Mammary epithelial cell (primary cell): ENCODE measurements at regions of chr18 and their contacts with region 1.

Region 1: DNA sequence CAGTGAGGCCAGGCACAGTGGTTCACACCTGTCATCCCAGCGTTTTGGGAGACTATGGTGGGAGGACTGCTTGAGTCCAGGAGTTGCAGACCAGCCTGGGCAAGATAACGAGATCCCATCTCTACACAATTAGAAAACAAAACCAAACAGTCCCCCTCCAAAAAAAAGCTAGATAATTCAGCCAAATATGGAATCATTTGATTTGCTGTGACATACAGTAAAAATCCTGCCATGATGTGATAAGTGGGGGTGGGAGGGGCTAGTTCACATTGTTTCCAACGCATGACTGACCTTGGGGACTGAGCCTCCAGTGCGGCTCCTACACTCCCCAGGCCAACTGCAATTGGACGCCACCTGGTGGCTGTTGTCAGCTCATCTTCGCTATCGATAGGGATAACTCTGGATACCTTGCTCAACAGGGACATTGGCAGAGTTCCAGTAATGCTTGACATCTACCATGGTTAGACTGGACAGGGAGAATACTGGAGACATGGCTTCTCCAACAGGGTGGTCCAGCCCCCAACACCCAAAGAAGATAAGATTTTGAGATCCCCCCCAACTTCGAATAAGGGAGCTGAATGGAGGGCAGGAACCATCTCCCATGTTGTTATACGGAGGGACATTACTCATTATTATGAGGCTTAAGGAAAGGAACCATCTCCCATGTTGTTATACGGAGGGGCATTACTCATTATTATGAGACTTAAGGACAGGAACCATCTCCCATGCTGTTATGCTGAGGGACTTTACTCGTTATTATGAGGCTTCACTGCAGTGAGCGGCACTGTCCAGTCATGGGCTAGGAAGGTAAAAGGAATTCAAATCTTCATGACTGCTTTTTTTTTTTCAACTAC is 135.9 kb downstream of the TGIF1 start:
- DNase-seq: peak; percentile 61
- H3K4me3 ChIP-seq: no peak overlapping the region
- H3K27ac ChIP-seq: no peak overlapping the region
- H3K4me1 ChIP-seq: peaks cover 9% of the 10 kb centered on the region
- H3K27me3 ChIP-seq: no peaks in the 10 kb centered on the region
- CTCF ChIP-seq: peak; percentile 86 to 90

Region 2: DNA sequence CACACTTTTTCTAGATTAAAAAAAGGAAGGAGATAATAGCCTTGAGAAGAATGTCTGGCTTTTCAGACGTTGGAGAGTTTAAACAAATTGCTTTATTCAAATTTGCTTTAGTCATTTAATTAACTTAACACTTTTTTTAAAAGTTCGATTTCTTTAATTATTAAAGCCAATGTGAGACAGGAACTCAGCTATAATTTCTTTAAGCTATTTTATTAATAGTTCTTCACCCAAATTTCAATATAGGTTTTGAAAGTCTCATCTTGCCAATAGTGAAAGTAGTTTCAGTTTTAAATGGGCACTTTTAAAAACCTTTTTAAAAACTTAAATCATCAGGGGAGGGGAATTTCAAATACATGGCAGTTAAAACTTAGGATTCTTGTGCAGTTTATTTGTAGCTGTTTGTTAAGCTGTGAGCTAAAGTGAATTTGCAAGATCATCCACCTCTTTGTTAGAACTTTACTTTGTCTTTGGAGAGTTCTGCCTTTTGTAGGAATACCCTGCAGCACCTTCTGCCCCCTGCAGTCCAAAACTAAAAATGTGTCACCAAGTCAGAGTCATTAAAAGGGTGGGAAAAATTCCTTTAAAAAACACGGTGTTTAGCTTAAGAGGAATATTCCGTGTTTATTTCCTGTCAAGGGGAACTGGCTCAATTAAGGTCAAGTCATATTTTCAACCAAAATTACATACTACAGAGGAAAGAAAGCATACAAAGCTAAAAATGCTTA is 131.4 kb before region 1 on chr18:
- CTCF ChIA-PET with region 1: interaction called, 7 read pairs
- dilution Hi-C with region 1: no loop called
- in situ Hi-C with region 1: loop called in 1 of 2 experiments (anchors 5 kb)
- intact Hi-C with region 1: loop called (anchors 1 kb)
- DNase-seq: peak; percentile 46
- H3K4me3 ChIP-seq: peak overlapping the region; percentile 48 to 91 (median 75)
- H3K27ac ChIP-seq: peak overlapping the region; percentile 97
- H3K4me1 ChIP-seq: peaks cover 41% of the 10 kb centered on the region
- H3K27me3 ChIP-seq: no peaks in the 10 kb centered on the region
- CTCF ChIP-seq: peak; percentile 60 to 63

Region 3: GRCh38 chr18:3481696-3482210 is 104.1 kb before region 1 on chr18:
- CTCF ChIA-PET with region 1: no interaction called
- dilution Hi-C with region 1: loop called (anchors 5 kb)
- in situ Hi-C with region 1: no loop called
- intact Hi-C with region 1: no loop called
- DNase-seq: no peak
- H3K4me3 ChIP-seq: no peak overlapping the region
- H3K27ac ChIP-seq: no peak overlapping the region
- H3K4me1 ChIP-seq: peaks cover 8% of the 10 kb centered on the region
- H3K27me3 ChIP-seq: no peaks in the 10 kb centered on the region
- CTCF ChIP-seq: peak; percentile 43

Region 4: GRCh38 chr18:3758531-3758930 is 172.6 kb after region 1 on chr18:
- CTCF ChIA-PET with region 1: no interaction called
- dilution Hi-C with region 1: no loop called
- in situ Hi-C with region 1: no loop called
- intact Hi-C with region 1: no loop called
- DNase-seq: peak; percentile 50
- H3K4me3 ChIP-seq: no peak overlapping the region
- H3K27ac ChIP-seq: no peak overlapping the region
- H3K4me1 ChIP-seq: no peaks in the 10 kb centered on the region
- H3K27me3 ChIP-seq: no peaks in the 10 kb centered on the region
- CTCF ChIP-seq: no peak